Common myeloid progenitor, CD34-positive (primary cell): ENCODE measurements at regions of chr4 and their contacts with region 1.

Region 1: GRCh38 chr4:114180481-114180880 is 201.0 kb upstream of the ARSJ start:
- DNase-seq: peak; percentile 62 to 72 (median 70)
- H3K4me3 ChIP-seq: no peak overlapping the region
- H3K27ac ChIP-seq: no peak overlapping the region
- H3K4me1 ChIP-seq: no peaks in the 10 kb centered on the region
- H3K27me3 ChIP-seq: no peaks in the 10 kb centered on the region

Region 2: GRCh38 chr4:113394730-113395530 is 785.6 kb before region 1 on chr4:
- CTCF ChIA-PET with region 1: interaction called, 13 read pairs
- POLR2A ChIA-PET with region 1: no interaction called
- DNase-seq: peak; percentile 78 to 89 (median 84)
- H3K4me3 ChIP-seq: no peak overlapping the region
- H3K27ac ChIP-seq: no peak overlapping the region
- H3K4me1 ChIP-seq: no peaks in the 10 kb centered on the region
- H3K27me3 ChIP-seq: no peaks in the 10 kb centered on the region

Region 3: GRCh38 chr4:114025176-114025777 is 155.2 kb before region 1 on chr4:
- CTCF ChIA-PET with region 1: no interaction called
- POLR2A ChIA-PET with region 1: no interaction called
- DNase-seq: no peak
- H3K4me3 ChIP-seq: no peak overlapping the region
- H3K27ac ChIP-seq: no peak overlapping the region
- H3K4me1 ChIP-seq: no peaks in the 10 kb centered on the region
- H3K27me3 ChIP-seq: no peaks in the 10 kb centered on the region